AG04450 (cell line): ENCODE measurements at regions of chr7 and their contacts with region 1.

Region 1: DNA sequence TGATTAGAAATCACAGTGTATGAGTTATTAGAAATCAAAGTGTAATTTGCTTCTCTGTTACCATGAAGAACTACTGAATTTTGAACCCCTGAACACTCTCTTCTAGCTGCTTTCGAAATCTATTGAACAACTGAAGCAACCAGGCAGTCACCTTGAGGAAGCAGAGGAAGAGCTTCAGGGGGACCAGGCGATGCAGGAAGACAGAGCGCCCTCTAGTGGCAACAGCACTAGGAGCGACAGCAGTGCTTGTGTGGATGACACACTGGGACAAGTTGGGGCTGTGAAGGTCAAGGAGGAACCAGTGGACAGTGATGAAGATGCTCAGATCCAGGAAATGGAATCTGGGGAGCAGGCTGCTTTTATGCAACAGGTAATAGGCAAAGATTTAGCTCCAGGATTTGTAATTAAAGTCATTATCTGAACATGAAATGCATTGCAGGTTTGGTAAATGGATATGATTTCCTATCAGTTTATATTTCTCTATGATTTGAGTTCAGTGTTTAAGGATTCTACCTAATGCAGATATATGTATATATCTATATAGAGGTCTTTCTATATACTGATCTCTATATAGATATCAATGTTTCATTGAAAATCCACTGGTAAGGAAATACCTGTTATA is 170.7 kb downstream of the HDAC9 start:
- DNase-seq: peak; percentile 24
- H3K4me3 ChIP-seq: no peak overlapping the region
- H3K27ac ChIP-seq: no peak overlapping the region
- H3K27me3 ChIP-seq: no peaks in the 10 kb centered on the region
- CTCF ChIP-seq: peak; percentile 89

Region 2: GRCh38 chr7:18177815-18178660 is 488.2 kb before region 1 on chr7:
- CTCF ChIA-PET with region 1: no interaction called
- POLR2A ChIA-PET with region 1: no interaction called
- DNase-seq: no peak
- H3K4me3 ChIP-seq: no peak overlapping the region
- H3K27ac ChIP-seq: no peak overlapping the region
- H3K27me3 ChIP-seq: peaks cover 2% of the 10 kb centered on the region
- CTCF ChIP-seq: no peak

Region 3: GRCh38 chr7:18638594-18639452 is 27.4 kb before region 1 on chr7:
- CTCF ChIA-PET with region 1: interaction called, 22 read pairs
- POLR2A ChIA-PET with region 1: no interaction called
- DNase-seq: no peak
- H3K4me3 ChIP-seq: no peak overlapping the region
- H3K27ac ChIP-seq: no peak overlapping the region
- H3K27me3 ChIP-seq: no peaks in the 10 kb centered on the region
- CTCF ChIP-seq: no peak

Region 4: DNA sequence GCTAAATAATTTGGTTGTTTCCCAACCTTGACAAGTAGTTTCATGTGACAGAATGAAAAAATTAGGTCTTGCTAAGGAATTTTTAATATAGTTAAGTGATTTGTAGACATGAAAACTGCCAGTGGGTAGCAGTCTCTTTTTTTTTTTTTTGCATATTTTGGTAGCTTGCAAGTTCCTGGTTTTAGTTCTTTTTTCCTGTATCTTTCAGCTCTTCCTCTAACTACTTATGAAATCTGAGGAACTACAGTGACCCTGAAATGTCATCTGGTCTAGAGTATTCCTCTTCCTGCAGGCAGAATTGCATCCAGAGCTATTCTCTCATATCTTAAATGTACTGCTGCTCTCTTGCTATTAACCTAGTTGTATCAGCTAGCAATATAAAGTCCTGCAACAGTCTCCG is 10.3 kb before region 1 on chr7:
- CTCF ChIA-PET with region 1: interaction called, 31 read pairs
- POLR2A ChIA-PET with region 1: no interaction called
- DNase-seq: no peak
- H3K4me3 ChIP-seq: no peak overlapping the region
- H3K27ac ChIP-seq: no peak overlapping the region
- H3K27me3 ChIP-seq: no peaks in the 10 kb centered on the region
- CTCF ChIP-seq: no peak

Region 5: GRCh38 chr7:18685971-18686370 is 19.8 kb after region 1 on chr7:
- CTCF ChIA-PET with region 1: interaction called, 13 read pairs
- POLR2A ChIA-PET with region 1: no interaction called
- DNase-seq: no peak
- H3K4me3 ChIP-seq: no peak overlapping the region
- H3K27ac ChIP-seq: no peak overlapping the region
- H3K27me3 ChIP-seq: no peaks in the 10 kb centered on the region
- CTCF ChIP-seq: no peak